Dendritic cell treated with granulocyte-macrophage colony-stimulating factor and Interleukin-4, amounts not matched to agents 40 ng/mL and 50 ng/mL, for 4 days (primary cell): ENCODE measurements at regions of chr10 and their contacts with region 1.

Region 1: DNA sequence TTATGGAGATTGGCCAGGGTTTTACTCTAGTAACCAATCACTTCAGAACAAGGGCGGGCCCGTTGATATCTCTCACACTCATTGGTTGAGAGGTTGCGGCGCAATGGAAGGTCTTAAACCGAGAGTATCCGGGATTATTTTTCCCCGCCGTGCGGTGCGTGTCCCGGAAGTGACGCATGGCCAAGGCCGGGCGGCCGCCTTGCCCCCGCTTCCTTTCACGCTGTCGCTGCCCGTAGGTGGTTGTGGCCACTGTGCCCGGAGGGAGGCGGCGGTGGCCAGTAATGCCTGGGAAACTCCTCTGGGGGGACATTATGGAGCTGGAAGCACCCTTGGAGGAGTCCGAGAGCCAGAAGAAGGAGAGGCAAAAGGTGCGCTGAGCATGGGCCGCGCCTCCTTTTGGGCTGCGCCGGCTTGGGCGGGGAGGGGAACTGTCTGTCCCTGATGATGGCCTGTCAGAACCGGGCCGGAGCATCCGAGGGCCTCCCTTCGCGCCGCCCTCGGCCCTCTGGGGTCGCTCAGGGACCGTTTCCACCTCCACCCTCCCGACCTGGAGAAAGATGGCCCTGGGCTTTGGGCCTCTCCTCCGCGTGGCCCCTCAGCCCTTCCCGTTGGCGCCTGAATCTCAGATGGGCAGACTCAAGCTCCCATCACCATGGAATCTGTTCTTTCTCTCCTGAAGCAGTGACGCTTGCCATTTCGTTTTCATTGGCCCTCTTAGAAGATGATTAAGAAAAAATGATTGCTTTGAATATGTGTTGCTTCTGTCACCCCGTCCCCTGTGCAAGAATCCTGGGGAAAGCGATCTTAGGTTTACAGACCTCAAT is at the start of gene DDX50:
- H3K4me3 Mint-ChIP-seq: peak within 1 kb of the TSS; percentile 97
- H3K27ac Mint-ChIP-seq: peak within 1 kb of the TSS; percentile 99
- H3K4me1 Mint-ChIP-seq: peaks cover 34% of the 10 kb centered on the region
- H3K27me3 Mint-ChIP-seq: peaks cover 8% of the 10 kb centered on the region

Region 2: GRCh38 chr10:68331455-68332258 is 569.7 kb before region 1 on chr10 and contains the start of gene HNRNPH3:
- intact Hi-C with region 1: loop called (anchors 10 kb)
- H3K4me3 Mint-ChIP-seq: peak within 1 kb of the TSS; percentile 99
- H3K27ac Mint-ChIP-seq: peak within 1 kb of the TSS; percentile 100
- H3K4me1 Mint-ChIP-seq: peaks cover 66% of the 10 kb centered on the region
- H3K27me3 Mint-ChIP-seq: no peaks in the 10 kb centered on the region

Region 3: GRCh38 chr10:68550747-68551411 is 350.4 kb before region 1 on chr10:
- intact Hi-C with region 1: loop called (anchors 2 kb)
- H3K4me3 Mint-ChIP-seq: no peak overlapping the region
- H3K27ac Mint-ChIP-seq: no peak overlapping the region
- H3K4me1 Mint-ChIP-seq: no peaks in the 10 kb centered on the region
- H3K27me3 Mint-ChIP-seq: peaks cover 28% of the 10 kb centered on the region

Region 4: GRCh38 chr10:68792115-68792514 is 109.2 kb before region 1 on chr10:
- intact Hi-C with region 1: loop called (anchors 10 kb)
- H3K4me3 Mint-ChIP-seq: no peak overlapping the region
- H3K27ac Mint-ChIP-seq: no peak overlapping the region
- H3K4me1 Mint-ChIP-seq: no peaks in the 10 kb centered on the region
- H3K27me3 Mint-ChIP-seq: no peaks in the 10 kb centered on the region